ENCODE measurements at regions of chr19 and their contacts with region 1.

Region 1: DNA sequence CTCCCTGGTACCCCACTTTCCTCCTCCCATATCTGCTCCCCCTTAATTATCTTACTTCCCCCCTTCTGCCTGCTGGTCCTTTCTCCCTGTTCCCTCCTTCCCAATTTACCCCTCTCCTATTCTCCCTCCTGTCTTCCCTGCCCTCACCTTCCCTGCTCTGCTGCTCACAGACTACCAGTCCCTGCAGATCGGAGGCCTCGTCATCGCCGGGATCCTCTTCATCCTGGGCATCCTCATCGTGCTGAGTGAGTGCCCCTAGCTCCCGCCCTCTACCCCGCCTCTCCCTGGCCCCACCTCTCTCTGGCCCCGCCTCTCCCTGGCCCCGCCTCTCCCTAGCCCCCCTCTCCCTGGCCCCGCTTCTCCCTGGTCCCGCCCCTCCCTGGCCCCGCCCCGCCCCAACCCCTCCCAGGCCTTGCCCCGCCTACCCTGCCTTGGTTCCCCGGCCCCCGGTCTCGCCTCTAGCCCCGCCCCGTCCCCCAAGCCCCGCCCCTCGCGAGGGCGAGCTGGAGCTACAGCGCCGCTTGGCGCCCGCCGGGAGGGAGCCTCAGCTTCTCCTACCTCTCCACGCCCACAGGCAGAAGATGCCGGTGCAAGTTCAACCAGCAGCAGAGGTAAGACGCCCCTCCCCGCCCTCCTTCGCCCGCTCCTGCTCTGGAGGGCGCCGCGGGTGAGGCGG is 2.0 kb upstream of the FXYD7 start:
- DNase-seq: peak; percentile 99
- ATAC-seq: peak; percentile 93
- H3K4me3 Mint-ChIP-seq: peak overlapping the region; percentile 75
- H3K27ac Mint-ChIP-seq: peak overlapping the region; percentile 65
- H3K4me1 Mint-ChIP-seq: peaks cover 31% of the 10 kb centered on the region
- H3K27me3 Mint-ChIP-seq: peaks cover 8% of the 10 kb centered on the region

Region 2: GRCh38 chr19:34974646-34975045 is 166.5 kb before region 1 on chr19:
- CTCF ChIA-PET with region 1: interaction called, 3 read pairs
- POLR2A ChIA-PET with region 1: no interaction called
- intact Hi-C with region 1: loop called in 1 of 2 experiments (anchors 5 kb)
- DNase-seq: no peak
- ATAC-seq: no peak
- H3K4me3 Mint-ChIP-seq: no peak overlapping the region
- H3K27ac Mint-ChIP-seq: peak overlapping the region; percentile 16
- H3K4me1 Mint-ChIP-seq: peaks cover 36% of the 10 kb centered on the region
- H3K27me3 Mint-ChIP-seq: no peaks in the 10 kb centered on the region

Region 3: DNA sequence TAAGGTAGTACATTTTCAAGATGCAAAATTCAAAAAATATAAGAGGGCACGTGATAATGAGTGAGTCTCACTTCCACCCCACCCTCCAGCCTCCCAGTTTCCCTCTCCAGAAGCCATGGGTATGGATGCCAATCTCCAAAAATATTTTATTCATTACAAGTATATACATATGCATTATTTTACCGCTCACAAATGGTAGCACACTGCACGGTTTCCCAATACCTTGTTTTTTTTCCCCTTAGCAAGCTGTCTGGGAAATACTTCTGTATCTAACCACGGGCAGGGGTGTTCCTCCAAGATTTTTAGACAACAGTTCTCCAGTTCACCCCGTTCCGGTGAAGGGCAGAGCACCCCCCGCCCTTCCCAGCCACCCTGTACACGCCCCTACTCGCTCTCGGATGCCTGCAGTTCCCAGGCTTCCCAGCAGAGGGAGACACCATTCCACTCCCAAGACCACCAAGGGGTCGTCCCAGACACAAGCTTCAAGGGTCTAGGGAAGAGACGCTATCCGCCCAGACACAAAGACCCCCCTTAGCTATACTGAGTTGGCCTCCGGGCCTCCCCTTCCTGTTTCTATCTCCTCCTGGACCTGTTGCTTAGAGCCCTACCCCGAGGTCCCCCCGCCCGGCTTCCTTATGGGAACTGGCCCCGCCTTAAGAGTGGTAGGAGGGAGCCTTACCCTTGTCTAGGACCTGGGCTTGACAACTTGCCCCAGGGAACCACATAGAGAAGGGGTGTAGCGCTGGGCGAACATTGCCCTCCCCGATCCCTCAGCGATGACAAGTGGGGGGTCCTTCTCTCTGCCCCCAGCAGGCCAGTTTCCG is 26.5 kb before region 1 on chr19:
- CTCF ChIA-PET with region 1: interaction called, 7 read pairs
- POLR2A ChIA-PET with region 1: no interaction called
- intact Hi-C with region 1: loop called in 1 of 2 experiments (anchors 1 kb)
- DNase-seq: peak; percentile 80
- ATAC-seq: peak; percentile 90
- H3K4me3 Mint-ChIP-seq: no peak overlapping the region
- H3K27ac Mint-ChIP-seq: no peak overlapping the region
- H3K4me1 Mint-ChIP-seq: peaks cover 6% of the 10 kb centered on the region
- H3K27me3 Mint-ChIP-seq: no peaks in the 10 kb centered on the region

Region 4: GRCh38 chr19:35154525-35155406 is 13.7 kb after region 1 on chr19 and contains the start of gene FXYD5:
- CTCF ChIA-PET with region 1: interaction called, 47 read pairs
- POLR2A ChIA-PET with region 1: interaction called, 5 read pairs
- intact Hi-C with region 1: loop called (anchors 1 kb)
- DNase-seq: peak; percentile 93
- ATAC-seq: peak; percentile 81
- H3K4me3 Mint-ChIP-seq: peak within 1 kb of the TSS; percentile 96
- H3K27ac Mint-ChIP-seq: peak within 1 kb of the TSS; percentile 99
- H3K4me1 Mint-ChIP-seq: peaks cover 52% of the 10 kb centered on the region
- H3K27me3 Mint-ChIP-seq: no peaks in the 10 kb centered on the region
- total RNA-seq, gene FXYD5: 261 to 358 TPM

Region 5: DNA sequence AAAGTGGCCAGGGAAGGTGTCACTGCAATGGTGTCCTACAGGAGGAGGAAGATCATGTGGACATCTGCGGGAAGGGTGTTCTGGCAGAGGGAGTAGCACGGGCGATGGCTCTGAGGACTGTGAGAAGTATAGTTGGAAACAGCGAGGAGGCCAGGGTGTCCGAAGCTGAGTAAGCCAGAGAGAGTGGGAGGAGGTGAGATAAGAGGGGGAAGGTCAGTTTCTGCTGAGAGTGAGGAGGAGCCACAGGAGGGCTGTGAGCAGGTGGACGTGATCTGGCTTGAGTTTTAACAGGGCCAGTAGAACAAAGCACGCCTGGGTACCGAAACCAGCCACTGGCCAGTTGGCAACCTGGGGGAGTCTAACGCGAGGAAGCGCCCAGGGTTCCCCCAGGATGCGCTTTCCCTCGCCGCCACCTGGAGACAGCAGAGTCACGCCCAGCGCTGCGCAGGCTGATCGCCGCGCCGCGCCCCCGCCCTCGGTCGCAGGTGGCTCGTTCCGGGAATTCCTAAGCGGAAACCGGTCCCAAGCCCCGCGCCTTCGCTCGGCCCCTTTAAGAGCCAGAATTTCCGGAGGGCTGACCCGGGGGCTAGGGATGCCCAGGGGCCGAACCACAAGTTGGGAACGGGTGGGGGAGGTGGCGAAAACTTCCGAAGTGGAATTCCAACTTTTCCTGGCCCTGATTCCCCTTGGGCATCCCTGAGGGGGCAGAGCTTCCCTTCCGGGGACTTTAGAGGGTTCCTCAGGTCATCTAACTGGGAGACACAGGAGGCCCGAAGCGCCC is 106.6 kb after region 1 on chr19:
- CTCF ChIA-PET with region 1: interaction called, 4 read pairs
- POLR2A ChIA-PET with region 1: no interaction called
- intact Hi-C with region 1: loop called in 1 of 2 experiments (anchors 1 kb)
- DNase-seq: peak; percentile 75
- ATAC-seq: peak; percentile 63
- H3K4me3 Mint-ChIP-seq: peak overlapping the region; percentile 79
- H3K27ac Mint-ChIP-seq: peak overlapping the region; percentile 87
- H3K4me1 Mint-ChIP-seq: peaks cover 22% of the 10 kb centered on the region
- H3K27me3 Mint-ChIP-seq: peaks cover 20% of the 10 kb centered on the region

Region 6: GRCh38 chr19:35347171-35347929 is 206.2 kb after region 1 on chr19 and contains the start of gene FFAR1:
- CTCF ChIA-PET with region 1: no interaction called
- POLR2A ChIA-PET with region 1: no interaction called
- intact Hi-C with region 1: loop called in 1 of 2 experiments (anchors 2 kb)
- DNase-seq: peak; percentile 85
- ATAC-seq: peak; percentile 74
- H3K4me3 Mint-ChIP-seq: peak within 1 kb of the TSS; percentile 67
- H3K27ac Mint-ChIP-seq: peak within 1 kb of the TSS; percentile 99
- H3K4me1 Mint-ChIP-seq: peaks cover 36% of the 10 kb centered on the region
- H3K27me3 Mint-ChIP-seq: peaks cover 3% of the 10 kb centered on the region
- total RNA-seq, gene FFAR1: 0.23 to 0.35 TPM